Right ventricle myocardium inferior (tissue), 1 donor: ENCODE measurements at regions of chr3 and their contacts with region 1.

Region 1: DNA sequence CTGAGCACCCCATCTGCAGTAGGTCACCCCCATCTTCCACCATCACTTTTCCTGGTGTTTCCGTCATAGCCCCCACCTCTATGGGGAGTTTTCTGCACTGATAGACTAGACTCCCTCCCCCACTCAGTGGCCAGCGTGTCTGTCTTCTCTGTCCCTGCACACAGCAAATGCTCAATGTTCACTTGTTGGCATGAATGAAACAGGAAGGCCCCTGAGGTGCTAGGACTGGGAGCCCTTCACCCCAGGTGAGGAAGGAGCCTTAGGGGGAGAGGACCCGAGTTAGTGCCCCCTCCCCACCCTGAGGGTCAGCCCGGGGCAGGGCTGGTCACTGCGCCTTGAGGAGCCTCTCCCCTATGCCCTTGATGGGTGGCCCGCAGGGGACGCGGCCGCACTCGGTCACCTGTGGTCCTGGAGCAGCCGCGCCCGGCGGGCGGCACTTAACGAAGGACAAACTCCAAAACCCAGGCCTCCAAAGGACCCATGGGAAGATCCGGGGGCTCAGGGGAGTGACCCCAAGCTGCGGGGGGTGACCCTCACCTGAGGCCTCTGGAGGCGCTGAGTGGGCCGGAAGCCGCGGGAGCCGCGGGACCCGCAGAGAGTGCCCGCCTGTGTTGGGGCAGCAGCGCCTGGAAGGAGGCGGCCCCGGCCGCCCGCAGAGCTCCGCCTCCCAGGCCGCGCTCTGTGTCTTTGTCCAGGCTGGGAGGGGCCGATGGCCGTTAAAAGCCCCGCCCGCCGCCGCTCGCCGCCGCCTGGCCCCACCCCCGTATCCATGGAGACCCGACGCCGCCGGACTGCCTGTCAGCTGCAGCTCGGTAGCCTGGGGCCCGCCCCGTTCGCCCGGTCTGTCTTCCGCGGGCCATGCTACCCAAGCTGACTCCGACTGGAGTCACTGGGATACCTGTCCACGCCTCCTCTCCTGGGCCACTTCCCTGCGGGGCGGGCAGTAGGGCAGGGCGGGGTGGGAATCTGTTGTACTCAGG is 15.5 kb upstream of the FANCD2 start:
- DNase-seq: peak; percentile 99
- ATAC-seq: peak; percentile 92

Region 2: DNA sequence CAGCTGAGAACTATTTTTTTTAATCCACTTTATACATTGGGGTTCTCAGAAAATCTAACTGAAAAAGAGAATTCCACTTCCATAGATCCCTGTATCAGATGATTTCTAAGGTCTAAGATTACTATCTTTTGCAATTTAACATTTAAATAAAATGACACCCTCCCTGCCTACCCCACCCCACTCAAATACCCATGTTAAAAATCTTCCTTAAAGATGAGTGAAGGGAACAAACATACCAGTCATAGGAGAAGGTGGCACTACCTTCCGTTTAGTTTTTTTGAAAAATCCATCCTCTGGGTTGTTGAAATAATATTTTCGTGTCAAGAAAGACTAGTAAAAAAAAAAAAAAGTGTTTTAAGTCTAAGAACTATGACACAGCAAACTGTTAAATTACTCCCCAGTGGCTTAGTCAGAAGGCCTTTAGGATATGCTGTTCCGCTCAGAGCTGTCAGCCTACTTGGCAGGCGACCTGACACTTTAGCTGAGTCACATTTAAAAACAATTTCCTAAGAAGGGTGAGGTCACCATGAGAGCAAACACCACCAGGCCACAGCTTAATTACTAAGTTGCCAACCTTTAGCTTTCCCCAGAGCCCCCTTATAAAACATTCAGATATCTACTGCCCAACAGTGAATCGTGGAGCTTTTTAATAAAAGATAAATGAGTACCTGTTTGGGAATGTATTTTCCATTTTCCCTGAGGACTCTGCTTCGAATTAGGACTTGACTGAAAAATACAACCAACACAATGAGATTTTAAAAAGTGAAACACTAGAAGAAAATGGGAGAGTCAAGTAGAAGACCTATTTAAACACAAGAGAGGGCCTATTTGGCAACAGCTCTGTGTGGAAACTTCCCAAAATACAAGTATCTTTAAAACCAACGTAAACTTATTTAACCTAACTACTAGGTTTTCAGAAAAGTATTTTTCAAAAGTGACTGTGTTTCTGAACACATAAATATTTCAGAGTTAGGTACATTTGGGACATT is 33.8 kb before region 1 on chr3:
- intact Hi-C with region 1: loop called (anchors 5 kb)
- DNase-seq: peak; percentile 82
- ATAC-seq: peak; percentile 98

Region 3: DNA sequence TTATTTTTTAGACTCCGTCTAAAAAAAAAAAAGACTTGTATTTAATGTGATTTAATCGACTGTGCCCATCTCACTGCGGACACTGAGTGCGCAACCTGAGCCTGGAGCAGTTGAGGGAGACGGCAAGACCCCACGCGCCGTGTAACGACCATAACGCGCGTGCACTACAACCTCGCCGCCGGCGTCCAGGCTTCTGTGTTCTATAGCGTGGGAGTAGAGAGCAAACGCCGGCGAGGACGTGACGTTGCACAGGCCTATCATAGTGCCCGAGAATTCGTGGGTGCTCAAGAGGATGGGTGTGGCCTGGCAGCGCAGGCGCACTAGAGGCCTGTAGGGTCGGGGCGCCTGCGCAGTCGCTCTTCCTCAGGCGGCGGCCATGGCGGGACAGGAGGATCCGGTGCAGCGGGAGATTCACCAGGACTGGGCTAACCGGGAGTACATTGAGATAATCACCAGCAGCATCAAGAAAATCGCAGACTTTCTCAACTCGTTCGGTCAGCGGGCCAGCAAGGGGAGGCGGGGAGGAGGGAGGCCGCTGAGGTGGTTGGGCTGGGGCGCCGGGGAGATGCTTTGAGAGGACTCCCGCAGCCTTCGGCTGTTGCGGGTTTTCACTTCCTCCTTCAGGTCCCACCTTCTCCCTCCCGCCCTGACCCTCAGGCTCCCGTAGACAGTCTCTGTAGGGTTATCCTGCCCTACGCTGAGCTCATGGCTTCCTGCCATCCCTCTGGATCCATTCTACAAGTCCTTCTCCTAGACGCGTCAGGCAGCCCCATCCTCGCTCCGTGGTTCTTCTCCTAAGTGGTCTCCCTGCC is 104.8 kb after region 1 on chr3 and contains the start of gene BRK1:
- intact Hi-C with region 1: loop called (anchors 10 kb)
- DNase-seq: peak; percentile 99
- ATAC-seq: peak; percentile 100
- total RNA-seq, gene BRK1: 98.2 TPM

Region 4: DNA sequence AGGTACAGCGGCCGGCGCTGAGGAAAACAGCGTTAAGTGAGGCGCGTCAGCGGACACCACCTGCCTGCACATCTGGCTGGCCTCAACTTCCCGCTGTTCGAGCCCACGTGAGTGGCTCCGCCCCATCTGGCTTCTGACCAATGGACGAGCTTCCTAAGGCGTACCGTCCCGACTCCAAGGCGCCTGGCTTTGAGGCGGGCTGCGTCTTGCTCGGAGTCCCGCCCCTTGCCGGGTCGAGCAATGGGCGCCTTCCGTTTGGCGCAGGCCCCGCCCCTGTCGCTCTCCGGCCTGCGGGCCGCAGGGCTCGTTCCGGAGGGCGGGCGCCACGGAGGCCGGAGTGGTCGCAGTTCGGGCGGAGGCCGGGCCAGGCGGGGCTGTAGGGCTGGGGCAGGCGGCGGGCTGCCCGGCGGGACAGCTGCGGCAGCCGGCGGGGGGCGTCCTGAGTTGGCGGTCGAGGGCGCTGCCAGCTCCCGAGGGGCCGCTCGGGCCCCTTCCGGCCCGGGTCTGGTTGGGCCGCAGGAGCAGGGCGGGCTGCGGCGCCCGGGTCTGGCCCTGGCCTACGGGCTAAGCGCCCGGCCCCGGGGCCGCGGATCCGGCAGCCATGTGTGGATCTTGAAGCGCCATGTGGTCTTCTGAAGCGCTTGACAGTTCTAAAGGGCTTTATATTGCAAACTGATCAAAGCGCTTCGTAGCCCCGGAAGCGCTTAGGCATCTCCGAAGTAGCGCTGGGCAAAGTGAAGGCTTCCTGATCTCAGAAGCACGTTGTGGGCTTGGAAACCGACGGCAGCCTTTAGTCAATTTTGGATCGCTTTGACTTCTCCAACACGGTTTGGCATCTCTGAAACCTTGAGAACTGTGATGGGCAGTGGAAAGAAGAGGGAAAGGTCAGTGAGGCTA is 237.7 kb after region 1 on chr3 and contains the start of gene TATDN2:
- intact Hi-C with region 1: no loop called
- DNase-seq: peak; percentile 98
- ATAC-seq: peak; percentile 100
- total RNA-seq, gene TATDN2: 15.1 TPM